Panc1 (cell line): ENCODE measurements at regions of chr7 and their contacts with region 1.

Region 1: DNA sequence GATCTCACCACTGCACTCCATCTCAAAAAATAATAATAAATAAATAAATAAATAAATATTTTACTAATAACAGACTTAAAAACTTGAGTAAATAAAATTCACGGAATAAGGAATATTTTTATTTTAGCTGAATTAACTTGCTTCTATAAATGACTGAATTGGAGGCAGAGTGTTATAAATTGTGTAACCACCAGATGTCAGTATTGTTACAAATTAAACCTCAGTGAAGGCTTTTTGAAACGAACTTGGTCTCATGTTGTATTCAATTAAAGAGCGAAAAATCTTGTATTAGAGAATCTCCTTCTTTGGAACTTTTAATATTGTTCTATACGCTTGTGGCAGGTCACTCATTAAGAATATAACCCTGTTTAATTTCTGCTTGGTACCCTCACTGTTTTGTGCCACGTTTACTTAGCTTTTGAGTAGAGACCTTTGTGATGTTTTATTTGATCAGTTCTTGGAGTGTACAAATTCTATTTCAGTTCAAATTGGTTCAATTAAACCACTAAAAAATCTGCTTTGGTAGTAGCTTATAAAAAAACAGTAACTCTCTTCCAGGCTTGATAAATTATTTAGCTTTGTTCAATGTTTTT is 45.6 kb upstream of the SCIN start:
- DNase-seq: peak; percentile 51
- ATAC-seq: peak; percentile 75; the same call in 1 of the 2 replicates
- H3K4me3 ChIP-seq: no peak overlapping the region
- H3K27ac ChIP-seq: 0 out of 2 replicates have a peak overlapping the region, but pooled peaks have one; percentile 21
- H3K4me1 ChIP-seq: no peaks in the 10 kb centered on the region
- H3K27me3 ChIP-seq: peaks cover 8% of the 10 kb centered on the region
- CTCF ChIP-seq: peak; percentile 64; the same call in 1 of the 2 replicates

Region 2: GRCh38 chr7:11355399-11356005 is 1169.4 kb before region 1 on chr7:
- CTCF ChIA-PET with region 1: no interaction called
- POLR2A ChIA-PET with region 1: interaction called, 12 read pairs
- in situ Hi-C with region 1: no loop called
- intact Hi-C with region 1: no loop called
- DNase-seq: no peak
- ATAC-seq: no peak
- H3K4me3 ChIP-seq: no peak overlapping the region
- H3K27ac ChIP-seq: no peak overlapping the region
- H3K4me1 ChIP-seq: no peaks in the 10 kb centered on the region
- H3K27me3 ChIP-seq: peaks cover 17% of the 10 kb centered on the region
- CTCF ChIP-seq: no peak

Region 3: GRCh38 chr7:12623897-12624498 is 99.1 kb after region 1 on chr7:
- CTCF ChIA-PET with region 1: interaction called, 17 read pairs
- POLR2A ChIA-PET with region 1: no interaction called
- in situ Hi-C with region 1: no loop called
- intact Hi-C with region 1: loop called (anchors 1 kb)
- DNase-seq: no peak
- ATAC-seq: peak; percentile 73; the same call in 1 of the 2 replicates
- H3K4me3 ChIP-seq: no peak overlapping the region
- H3K27ac ChIP-seq: no peak overlapping the region
- H3K4me1 ChIP-seq: peaks cover 8% of the 10 kb centered on the region; the same call in 1 of the 2 replicates
- H3K27me3 ChIP-seq: peaks cover 3% of the 10 kb centered on the region; the same call in 1 of the 2 replicates
- CTCF ChIP-seq: peak; percentile 93; the same call in 1 of the 2 replicates

Region 4: DNA sequence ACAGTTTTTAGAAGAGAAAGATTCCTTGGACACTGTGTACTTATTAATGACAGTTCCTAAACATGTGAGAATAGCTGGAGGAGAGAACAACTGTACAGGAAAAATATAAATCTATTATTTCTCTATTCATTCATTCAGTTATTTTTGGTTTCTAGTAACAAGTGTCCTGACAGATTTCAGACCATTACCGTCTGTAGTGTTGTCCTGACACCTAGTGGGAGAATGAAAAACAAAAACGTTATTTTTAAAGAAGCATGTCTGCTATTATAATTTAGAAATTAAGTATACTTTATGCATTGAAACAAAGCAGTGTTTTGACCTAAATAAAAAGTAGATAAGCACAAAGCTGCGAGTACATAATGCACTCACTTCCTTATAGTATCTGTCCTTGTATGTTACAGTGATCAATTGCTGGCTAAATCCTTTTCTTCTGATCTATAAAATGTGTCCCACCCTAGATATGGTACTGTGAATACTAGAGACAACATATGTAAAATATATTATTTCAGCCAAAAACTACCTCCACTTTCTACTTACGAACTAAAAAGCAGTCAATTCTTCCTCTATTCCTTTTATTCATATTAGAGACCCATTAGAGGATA is 738.1 kb after region 1 on chr7:
- CTCF ChIA-PET with region 1: interaction called, 8 read pairs
- POLR2A ChIA-PET with region 1: no interaction called
- in situ Hi-C with region 1: no loop called
- intact Hi-C with region 1: loop called (anchors 5 kb)
- DNase-seq: no peak
- ATAC-seq: no peak; the same call in none of the 2 replicates
- H3K4me3 ChIP-seq: no peak overlapping the region
- H3K27ac ChIP-seq: no peak overlapping the region
- H3K4me1 ChIP-seq: no peaks in the 10 kb centered on the region
- H3K27me3 ChIP-seq: no peaks in the 10 kb centered on the region; the same call in 1 of the 2 replicates
- CTCF ChIP-seq: peak; percentile 67; the same call in 1 of the 2 replicates